HCT116 (cell line): ENCODE measurements at regions of chr14 and their contacts with region 1.

Region 1: GRCh38 chr14:84961637-84962036 is 568.3 kb upstream of the FLRT2 start:
- DNase-seq: no peak
- ATAC-seq: no peak
- H3K4me3 ChIP-seq: no peak overlapping the region
- H3K27ac ChIP-seq: no peak overlapping the region
- H3K4me1 ChIP-seq: no peaks in the 10 kb centered on the region
- H3K27me3 ChIP-seq: no peaks in the 10 kb centered on the region
- CTCF ChIP-seq: no peak
- POLR2A ChIP-seq: no peak
- RAD21 ChIP-seq: no peak

Region 2: GRCh38 chr14:84882830-84883229 is 78.8 kb before region 1 on chr14:
- CTCF ChIA-PET with region 1: no interaction called
- POLR2A ChIA-PET with region 1: no interaction called
- RAD21 ChIA-PET with region 1: interaction called in 1 of 2 experiments, 10 read pairs
- intact Hi-C with region 1: no loop called
- DNase-seq: no peak
- ATAC-seq: no peak
- H3K4me3 ChIP-seq: no peak overlapping the region
- H3K27ac ChIP-seq: no peak overlapping the region
- H3K4me1 ChIP-seq: no peaks in the 10 kb centered on the region
- H3K27me3 ChIP-seq: no peaks in the 10 kb centered on the region
- CTCF ChIP-seq: no peak
- POLR2A ChIP-seq: no peak
- RAD21 ChIP-seq: no peak

Region 3: GRCh38 chr14:84991021-84991420 is 29.4 kb after region 1 on chr14:
- CTCF ChIA-PET with region 1: no interaction called
- POLR2A ChIA-PET with region 1: no interaction called
- RAD21 ChIA-PET with region 1: no interaction called
- intact Hi-C with region 1: no loop called
- DNase-seq: no peak
- ATAC-seq: no peak
- H3K4me3 ChIP-seq: no peak overlapping the region
- H3K27ac ChIP-seq: no peak overlapping the region
- H3K4me1 ChIP-seq: no peaks in the 10 kb centered on the region
- H3K27me3 ChIP-seq: no peaks in the 10 kb centered on the region
- CTCF ChIP-seq: no peak
- POLR2A ChIP-seq: no peak
- RAD21 ChIP-seq: no peak